Activated T-helper 2 cell treated with anti-CD3 and anti-CD28 coated beads, Interferon-gamma antibody, Interleukin-2, Interleukin-4, amounts not matched to agents 10 μg/mL and 5 μg/mL and 100 μg/mL, durations not matched to agents 14 hours and 24 hours and 36 hours (primary cell): ENCODE measurements at regions of chr1 and their contacts with region 1.

Region 1: GRCh38 chr1:109099938-109100773 is 9.6 kb downstream of the TMEM167B start:
- DNase-seq: peak; percentile 95
- H3K4me3 Mint-ChIP-seq: peak overlapping the region; percentile 99
- H3K27ac Mint-ChIP-seq: peak overlapping the region; percentile 94
- H3K4me1 Mint-ChIP-seq: peaks cover 3% of the 10 kb centered on the region
- H3K27me3 Mint-ChIP-seq: no peaks in the 10 kb centered on the region

Region 2: GRCh38 chr1:107949467-107950253 is 1150.5 kb before region 1 on chr1:
- intact Hi-C with region 1: no loop called
- DNase-seq: no peak
- H3K4me3 Mint-ChIP-seq: no peak overlapping the region
- H3K27ac Mint-ChIP-seq: no peak overlapping the region
- H3K4me1 Mint-ChIP-seq: peaks cover 22% of the 10 kb centered on the region
- H3K27me3 Mint-ChIP-seq: peaks cover 6% of the 10 kb centered on the region

Region 3: DNA sequence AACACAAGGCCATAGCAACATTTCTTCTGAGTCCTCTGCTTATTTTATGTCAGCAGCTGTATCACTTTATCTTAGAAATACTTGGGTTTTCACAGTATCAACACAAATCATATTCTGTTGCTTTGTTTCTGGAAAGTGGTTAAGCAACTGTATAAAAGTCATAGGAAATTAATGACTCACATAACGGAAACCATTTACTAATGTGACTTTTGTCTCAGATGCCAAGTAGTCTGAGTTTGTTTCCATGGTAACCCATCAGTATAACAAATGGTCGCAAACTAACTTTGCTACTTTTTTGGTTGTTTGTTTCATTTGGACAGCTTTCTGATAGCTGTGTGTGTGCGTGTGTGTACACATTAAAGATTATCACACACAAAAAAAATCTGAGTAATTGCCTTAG is 509.2 kb before region 1 on chr1:
- intact Hi-C with region 1: no loop called
- DNase-seq: peak; percentile 15
- H3K4me3 Mint-ChIP-seq: no peak overlapping the region
- H3K27ac Mint-ChIP-seq: peak overlapping the region; percentile 14
- H3K4me1 Mint-ChIP-seq: peaks cover 60% of the 10 kb centered on the region
- H3K27me3 Mint-ChIP-seq: no peaks in the 10 kb centered on the region

Region 4: GRCh38 chr1:109075531-109076490 is 24.3 kb before region 1 on chr1 and contains the start of gene TAF13:
- intact Hi-C with region 1: loop called (anchors 1 kb)
- DNase-seq: peak; percentile 83
- H3K4me3 Mint-ChIP-seq: peak within 1 kb of the TSS; percentile 96
- H3K27ac Mint-ChIP-seq: peak within 1 kb of the TSS; percentile 88
- H3K4me1 Mint-ChIP-seq: peaks cover 13% of the 10 kb centered on the region
- H3K27me3 Mint-ChIP-seq: no peaks in the 10 kb centered on the region
- total RNA-seq, gene TAF13: 21.6 and 25.0 TPM in 2 replicates

Region 5: GRCh38 chr1:109193653-109194590 is 93.8 kb after region 1 on chr1:
- intact Hi-C with region 1: loop called (anchors 5 kb)
- DNase-seq: peak; percentile 50
- H3K4me3 Mint-ChIP-seq: no peak overlapping the region
- H3K27ac Mint-ChIP-seq: no peak overlapping the region
- H3K4me1 Mint-ChIP-seq: peaks cover 10% of the 10 kb centered on the region
- H3K27me3 Mint-ChIP-seq: no peaks in the 10 kb centered on the region

Region 6: DNA sequence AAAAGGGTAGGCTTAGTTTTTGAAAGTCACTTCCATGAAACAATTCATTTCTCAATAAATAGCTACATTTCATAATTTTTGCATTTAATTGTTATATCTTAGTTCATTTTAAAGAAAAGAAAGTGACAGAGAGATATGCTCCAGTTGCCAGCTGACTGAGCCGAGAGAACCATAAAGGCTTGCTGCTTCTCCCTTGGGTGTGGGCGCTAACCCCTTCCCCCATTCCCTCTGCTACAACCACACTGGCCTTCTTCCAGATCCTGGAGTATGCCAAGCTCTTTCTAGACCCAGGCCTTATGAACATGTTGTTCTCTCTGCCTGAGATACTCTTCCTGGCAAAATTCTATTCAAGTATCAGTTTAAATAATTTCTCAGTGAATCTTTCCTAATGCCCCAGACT is 285.3 kb after region 1 on chr1:
- intact Hi-C with region 1: no loop called
- DNase-seq: no peak
- H3K4me3 Mint-ChIP-seq: no peak overlapping the region
- H3K27ac Mint-ChIP-seq: no peak overlapping the region
- H3K4me1 Mint-ChIP-seq: peaks cover 10% of the 10 kb centered on the region
- H3K27me3 Mint-ChIP-seq: peaks cover 12% of the 10 kb centered on the region